Activated CD4-positive, alpha-beta memory T cell treated with anti-CD3 and anti-CD28 coated beads, Interleukin-2, amount 10 ng/mL, durations not matched to agents 7 days and 5 days (primary cell): ENCODE measurements at regions of chr3 and their contacts with region 1.

Region 1: DNA sequence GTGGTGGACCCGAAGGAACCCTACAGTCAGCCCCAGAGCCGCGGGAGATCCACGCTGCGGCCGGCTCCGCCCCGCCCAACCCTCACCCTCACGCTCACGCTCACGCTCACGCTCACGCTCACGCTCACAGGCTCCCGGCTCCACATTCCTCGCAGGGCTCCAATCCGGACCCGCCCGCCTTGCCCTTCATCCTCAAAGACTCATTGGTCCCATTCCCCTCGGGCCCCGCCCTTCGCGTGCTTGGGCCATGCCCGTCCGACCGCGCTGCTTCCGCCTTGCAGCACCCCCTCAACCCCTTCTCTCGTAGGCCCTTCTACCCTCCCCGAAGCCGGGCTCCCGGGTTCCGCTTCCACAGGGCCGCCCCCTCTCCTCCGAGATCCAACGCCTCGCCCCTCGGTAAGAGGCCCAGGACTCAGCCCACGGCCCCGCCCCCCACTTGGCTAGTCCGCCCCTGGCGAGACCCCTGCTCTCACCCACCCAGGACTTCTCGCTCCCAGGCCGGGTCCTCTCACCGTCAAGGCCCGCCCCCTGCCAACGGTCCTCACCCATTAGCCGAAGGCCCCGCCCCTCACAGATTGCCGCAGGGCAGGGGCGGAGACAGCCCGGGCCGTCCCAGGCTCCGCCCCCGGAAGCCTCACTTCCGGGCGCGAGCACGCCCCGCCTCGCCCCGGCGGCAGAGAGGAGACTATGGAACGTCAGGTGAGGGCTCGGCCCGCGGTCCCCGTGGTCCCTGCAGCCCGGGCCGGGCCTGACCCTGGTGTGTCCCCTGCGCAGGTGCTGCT is at the start of gene APEH:
- DNase-seq: peak; percentile 99
- H3K4me3 Mint-ChIP-seq: peak within 1 kb of the TSS; percentile 91
- H3K27ac Mint-ChIP-seq: peak within 1 kb of the TSS; percentile 98
- H3K4me1 Mint-ChIP-seq: peaks cover 37% of the 10 kb centered on the region
- H3K27me3 Mint-ChIP-seq: no peaks in the 10 kb centered on the region
- total RNA-seq, gene APEH: 132 to 136 TPM

Region 2: GRCh38 chr3:49553692-49554632 is 119.9 kb before region 1 on chr3 and contains the start of gene BSN:
- CTCF ChIA-PET with region 1: interaction called, 14 read pairs
- POLR2A ChIA-PET with region 1: interaction called, 4 read pairs
- DNase-seq: peak; percentile 83
- H3K4me3 Mint-ChIP-seq: peak within 1 kb of the TSS; percentile 75
- H3K27ac Mint-ChIP-seq: no peak within 1 kb of the TSS
- H3K4me1 Mint-ChIP-seq: peaks cover 29% of the 10 kb centered on the region
- H3K27me3 Mint-ChIP-seq: peaks cover 56% of the 10 kb centered on the region
- total RNA-seq, gene BSN: 0.03 to 0.05 TPM

Region 3: DNA sequence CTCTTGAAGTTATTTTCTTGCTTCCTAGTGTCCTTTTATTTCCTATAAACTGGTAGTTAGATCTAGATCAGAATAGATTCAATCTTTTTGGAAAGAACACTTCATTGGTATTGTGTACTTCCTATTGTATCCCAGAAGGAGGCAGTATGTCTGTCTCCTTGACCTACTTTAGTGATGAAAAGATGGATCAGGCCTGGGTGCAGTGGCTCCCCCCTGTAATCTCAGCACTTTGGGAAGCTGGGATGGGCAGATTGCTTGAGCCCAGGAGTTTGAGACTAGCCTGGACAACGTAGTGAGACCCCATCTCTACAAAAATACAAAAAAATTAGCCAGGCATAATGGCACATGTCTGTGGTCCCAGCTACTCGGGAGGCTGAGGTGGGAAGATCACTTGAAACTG is 107.6 kb before region 1 on chr3:
- CTCF ChIA-PET with region 1: interaction called, 26 read pairs
- POLR2A ChIA-PET with region 1: no interaction called
- DNase-seq: no peak
- H3K4me3 Mint-ChIP-seq: no peak overlapping the region
- H3K27ac Mint-ChIP-seq: no peak overlapping the region
- H3K4me1 Mint-ChIP-seq: no peaks in the 10 kb centered on the region
- H3K27me3 Mint-ChIP-seq: peaks cover 17% of the 10 kb centered on the region